ENCODE measurements at regions of chr13 and their contacts with region 1.

Region 1: DNA sequence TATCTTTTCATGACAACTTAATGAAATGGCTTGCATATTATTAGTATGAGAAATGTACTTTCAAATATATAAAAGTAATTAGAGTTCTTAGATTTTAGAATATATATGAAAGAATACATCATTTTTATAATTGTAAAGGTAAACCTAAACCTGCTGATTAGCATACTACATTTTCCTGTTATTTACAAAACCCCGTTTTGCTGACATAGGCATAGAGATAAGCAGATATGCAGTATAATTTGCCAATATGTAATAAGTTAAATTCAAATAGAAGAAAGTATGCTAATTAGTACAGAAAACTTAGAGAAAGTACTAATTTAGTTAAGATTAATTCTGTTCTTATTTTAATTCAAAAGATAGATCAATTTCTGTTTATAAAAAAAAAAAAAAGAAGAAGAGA is 21.5 kb downstream of the MAB21L1 start:
- DNase-seq: no peak
- H3K4me3 ChIP-seq: no peak overlapping the region
- H3K27ac ChIP-seq: no peak overlapping the region
- H3K4me1 ChIP-seq: no peaks in the 10 kb centered on the region
- H3K27me3 ChIP-seq: no peaks in the 10 kb centered on the region
- CTCF ChIP-seq: no peak
- POLR2A ChIP-seq: no peak

Region 2: DNA sequence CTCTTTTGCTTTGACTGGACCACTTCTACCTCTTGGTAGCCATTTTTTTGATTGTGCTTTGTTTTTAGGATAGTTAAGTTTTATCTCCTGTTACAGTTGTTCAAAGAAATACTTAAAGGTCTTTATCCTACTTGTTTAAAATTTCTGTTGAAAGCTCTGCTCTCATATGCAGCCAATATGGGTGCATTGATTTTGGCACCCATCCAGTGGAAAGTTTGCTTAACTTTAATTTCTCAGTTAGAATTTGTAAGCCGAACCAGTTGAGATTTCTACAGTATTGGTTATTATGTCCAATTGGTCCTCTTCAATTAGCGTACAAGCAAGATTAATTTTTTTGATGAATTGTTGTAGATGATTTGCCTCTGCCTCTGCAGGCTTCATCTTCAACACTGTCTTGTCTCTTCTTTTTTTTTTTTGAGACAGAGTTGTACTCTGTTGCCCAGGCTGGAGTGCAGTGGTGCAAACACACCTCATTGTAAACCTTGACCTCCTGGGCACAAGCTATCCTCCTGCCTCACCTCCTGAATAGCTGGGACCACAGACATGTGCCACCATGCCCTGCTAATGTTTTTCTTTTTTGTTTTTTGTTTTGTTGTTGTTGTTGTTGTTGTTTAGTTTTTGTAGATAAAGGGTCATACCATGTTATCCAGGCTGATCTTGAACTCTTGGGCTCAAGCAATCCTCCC is 43.8 kb before region 1 on chr13:
- CTCF ChIA-PET with region 1: no interaction called
- POLR2A ChIA-PET with region 1: no interaction called
- dilution Hi-C with region 1: no loop called
- intact Hi-C with region 1: loop called (anchors 5 kb)
- DNase-seq: no peak
- H3K4me3 ChIP-seq: no peak overlapping the region
- H3K27ac ChIP-seq: no peak overlapping the region
- H3K4me1 ChIP-seq: no peaks in the 10 kb centered on the region
- H3K27me3 ChIP-seq: no peaks in the 10 kb centered on the region
- CTCF ChIP-seq: no peak
- POLR2A ChIP-seq: no peak

Region 3: GRCh38 chr13:35549481-35549880 is 94.5 kb after region 1 on chr13:
- CTCF ChIA-PET with region 1: no interaction called
- POLR2A ChIA-PET with region 1: no interaction called
- dilution Hi-C with region 1: no loop called
- intact Hi-C with region 1: no loop called
- DNase-seq: peak; percentile 75
- H3K4me3 ChIP-seq: no peak overlapping the region
- H3K27ac ChIP-seq: no peak overlapping the region
- H3K4me1 ChIP-seq: peaks cover 16% of the 10 kb centered on the region
- H3K27me3 ChIP-seq: no peaks in the 10 kb centered on the region
- CTCF ChIP-seq: no peak
- POLR2A ChIP-seq: no peak

Measured in endothelial cell of umbilical vein (primary cell).